Psoas muscle (tissue), 8 donors: ENCODE measurements at regions of chr10 and their contacts with region 1.

Region 1: DNA sequence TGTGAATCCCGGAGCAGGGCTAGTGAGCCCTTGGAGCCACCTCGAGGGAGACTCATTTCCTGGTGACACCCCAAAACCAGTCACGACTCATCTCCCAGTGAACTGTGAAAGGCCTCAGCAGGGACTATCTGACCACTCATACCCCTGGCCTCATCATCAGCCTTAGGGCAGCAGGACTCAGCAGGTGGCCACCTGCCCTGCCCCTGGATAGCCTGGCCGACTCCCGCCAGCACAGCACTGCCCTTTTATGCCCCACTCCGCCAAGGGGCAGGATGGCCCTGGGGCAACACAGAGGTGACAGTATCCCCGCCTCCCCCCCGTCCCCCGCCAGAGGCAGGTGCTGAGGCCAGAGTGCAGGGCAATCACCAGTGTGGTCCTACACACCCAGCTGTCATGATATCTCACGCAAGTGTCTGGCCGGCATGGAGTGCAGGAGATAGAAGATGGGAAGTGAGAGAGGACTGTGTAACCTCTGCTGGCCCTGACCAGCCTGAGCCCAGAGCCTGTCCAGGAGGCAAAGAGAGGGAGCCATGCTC is 3.2 kb downstream of the SNCG start:
- DNase-seq: no peak
- ATAC-seq: no peak
- H3K4me3 ChIP-seq: no peak overlapping the region
- H3K27ac ChIP-seq: no peak overlapping the region
- H3K4me1 ChIP-seq: peaks cover 10% of the 10 kb centered on the region
- H3K27me3 ChIP-seq: no peaks in the 10 kb centered on the region
- CTCF ChIP-seq: no peak

Region 2: DNA sequence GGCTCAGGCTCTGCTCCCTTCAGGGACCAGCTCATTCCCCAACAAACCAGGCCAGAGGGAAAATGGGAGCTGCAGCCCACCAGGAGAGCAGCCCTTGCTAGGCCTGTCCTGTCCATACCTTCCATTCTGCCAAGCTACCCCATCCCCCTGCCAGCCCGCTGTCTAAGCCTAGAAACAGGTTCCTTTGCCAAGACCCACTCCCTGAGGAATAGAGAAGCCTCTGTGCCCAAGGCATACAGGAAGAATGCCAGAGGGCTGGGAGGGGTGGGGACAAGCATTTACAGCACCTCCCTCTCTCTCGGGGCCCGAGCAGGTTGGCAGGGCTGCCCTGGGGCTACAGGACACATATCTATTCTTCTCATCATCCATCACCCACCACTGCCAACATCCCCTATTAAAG is 773.3 kb before region 1 on chr10:
- intact Hi-C with region 1: no loop called
- DNase-seq: no peak
- ATAC-seq: no peak
- H3K4me3 ChIP-seq: no peak overlapping the region
- H3K27ac ChIP-seq: no peak overlapping the region
- H3K4me1 ChIP-seq: no peaks in the 10 kb centered on the region
- H3K27me3 ChIP-seq: peaks cover 0 to 3% (median 3%) of the 10 kb centered on the region in 3 donors
- CTCF ChIP-seq: no peak

Region 3: DNA sequence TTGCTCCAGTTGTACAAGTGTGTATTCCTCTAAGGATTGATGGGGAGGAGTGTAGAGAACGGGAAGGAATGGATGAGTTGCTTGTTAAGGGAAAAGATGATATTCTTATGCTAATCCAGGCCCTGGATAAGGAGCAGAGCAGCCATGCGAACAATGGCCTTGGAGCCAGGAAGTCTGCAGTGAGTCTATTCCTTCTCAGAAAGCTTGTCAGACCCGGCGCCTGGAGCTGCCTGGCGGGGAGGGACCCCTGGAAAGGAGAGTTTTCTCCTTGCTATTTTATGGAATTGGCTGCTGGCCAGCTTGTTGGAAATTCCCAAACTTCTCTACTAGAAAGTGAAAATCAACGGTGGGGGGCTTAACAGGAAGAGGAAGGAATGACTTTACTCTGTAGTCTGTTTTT is 93.3 kb before region 1 on chr10:
- intact Hi-C with region 1: no loop called
- DNase-seq: no peak
- ATAC-seq: no peak
- H3K4me3 ChIP-seq: no peak overlapping the region
- H3K27ac ChIP-seq: no peak overlapping the region
- H3K4me1 ChIP-seq: peaks cover 34% of the 10 kb centered on the region
- H3K27me3 ChIP-seq: no peaks in the 10 kb centered on the region
- CTCF ChIP-seq: no peak

Region 4: DNA sequence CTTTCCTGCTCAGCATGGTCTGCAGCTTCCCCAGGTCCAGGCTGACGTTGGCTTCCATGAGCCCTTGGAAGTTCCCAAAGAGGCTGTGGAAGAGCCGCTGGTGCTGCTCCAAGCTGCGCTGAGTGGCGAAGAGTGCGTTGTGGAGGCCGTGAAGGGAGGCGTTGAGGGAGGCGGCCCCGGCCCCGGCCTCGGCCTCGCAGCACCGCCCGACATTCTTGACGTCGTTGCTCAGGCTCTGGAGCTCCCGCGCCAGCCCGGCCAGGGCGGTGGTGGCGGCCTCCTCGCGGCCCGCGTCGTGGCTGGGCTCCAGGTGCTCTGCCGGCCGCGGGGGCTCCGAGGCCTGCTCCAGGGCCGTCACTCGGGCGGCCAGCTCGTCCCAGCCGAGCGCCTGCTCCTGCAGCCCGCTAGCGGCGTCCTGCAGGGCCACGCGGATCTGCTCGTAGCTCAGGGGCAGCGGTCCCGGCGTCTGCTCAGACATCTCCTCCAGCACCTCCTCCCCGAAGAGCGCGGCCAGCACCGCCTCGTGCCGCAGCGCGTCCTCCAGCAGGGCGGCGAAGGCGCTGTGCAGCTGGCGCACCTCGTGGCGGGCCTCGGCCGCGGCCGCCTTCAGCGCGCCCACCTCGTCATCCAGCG is 19.1 kb before region 1 on chr10:
- intact Hi-C with region 1: loop called in 1 of 2 experiments (anchors 2 kb)
- DNase-seq: peak; percentile 24 to 64
- ATAC-seq: peak in 1 of 4 donors; percentile 14
- H3K4me3 ChIP-seq: peak overlapping the region; percentile 22
- H3K27ac ChIP-seq: no peak overlapping the region
- H3K4me1 ChIP-seq: peaks cover 6% of the 10 kb centered on the region
- H3K27me3 ChIP-seq: no peaks in the 10 kb centered on the region
- CTCF ChIP-seq: no peak

Region 5: GRCh38 chr10:87079106-87079836 is 117.6 kb after region 1 on chr10:
- intact Hi-C with region 1: no loop called
- DNase-seq: no peak
- ATAC-seq: no peak
- H3K4me3 ChIP-seq: no peak overlapping the region
- H3K27ac ChIP-seq: no peak overlapping the region
- H3K4me1 ChIP-seq: no peaks in the 10 kb centered on the region
- H3K27me3 ChIP-seq: no peaks in the 10 kb centered on the region
- CTCF ChIP-seq: no peak